Testis (tissue), 5 donors: ENCODE measurements at regions of chr7 and their contacts with region 1.

Region 1: GRCh38 chr7:4681886-4682620 is at the start of gene FOXK1:
- DNase-seq: peak; percentile 70
- H3K4me3 ChIP-seq: peak within 1 kb of the TSS; percentile 80 to 93
- H3K27ac ChIP-seq: peak within 1 kb of the TSS; percentile 92 to 95
- H3K4me1 ChIP-seq: peaks cover 13% of the 10 kb centered on the region
- H3K27me3 ChIP-seq: no peaks in the 10 kb centered on the region
- CTCF ChIP-seq: peak in 1 of 3 experiments; percentile 14
- POLR2A ChIP-seq: no peak
- total RNA-seq, gene FOXK1: 56.7 to 65.2 TPM

Region 2: DNA sequence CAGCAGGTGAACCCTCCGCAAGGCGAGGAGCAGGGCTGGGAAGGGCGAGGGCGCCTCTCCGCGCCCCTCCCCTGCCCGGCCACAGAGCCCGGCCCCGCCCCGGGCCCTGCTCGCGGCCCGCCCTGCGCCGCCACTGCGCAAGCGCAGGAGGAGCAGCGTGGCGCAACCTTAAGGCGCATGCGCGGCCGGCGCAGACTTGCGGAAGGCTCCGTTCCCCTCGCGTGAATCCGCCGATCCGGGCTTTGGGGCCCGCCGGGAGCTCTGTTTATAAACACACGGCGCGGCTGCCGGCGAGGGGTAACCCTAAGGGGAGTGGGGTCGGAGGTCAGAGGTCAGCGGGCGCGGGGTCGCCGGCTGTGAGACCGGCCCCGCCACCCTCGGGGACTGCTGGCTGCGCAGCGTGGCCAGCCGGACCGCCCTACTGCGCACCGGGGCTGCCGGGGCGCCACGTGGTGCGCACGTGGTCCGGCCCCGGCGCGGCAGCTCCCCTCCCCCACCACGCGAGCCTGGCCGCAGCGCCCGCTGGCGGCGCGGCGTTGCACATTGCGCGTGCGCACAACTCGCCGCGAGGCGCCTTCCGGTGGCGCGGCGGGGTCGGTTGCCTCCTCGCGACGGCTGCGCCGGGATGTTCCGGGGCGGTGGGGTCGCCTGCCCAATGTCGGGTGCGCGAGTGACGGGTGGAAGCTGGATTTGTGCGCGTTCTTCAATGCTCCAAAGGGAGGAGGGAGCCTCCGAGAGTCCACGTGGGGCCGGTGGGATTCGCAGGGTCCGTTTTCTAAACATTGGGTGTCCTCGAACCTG is 40.2 kb before region 1 on chr7:
- intact Hi-C with region 1: loop called (anchors 5 kb)
- DNase-seq: peak; percentile 93
- H3K4me3 ChIP-seq: peak overlapping the region; percentile 61 to 72
- H3K27ac ChIP-seq: peak overlapping the region; percentile 64 to 91
- H3K4me1 ChIP-seq: no peaks in the 10 kb centered on the region
- H3K27me3 ChIP-seq: no peaks in the 10 kb centered on the region
- CTCF ChIP-seq: peak; percentile 27 to 77 (median 68)
- POLR2A ChIP-seq: peak; percentile 15

Region 3: DNA sequence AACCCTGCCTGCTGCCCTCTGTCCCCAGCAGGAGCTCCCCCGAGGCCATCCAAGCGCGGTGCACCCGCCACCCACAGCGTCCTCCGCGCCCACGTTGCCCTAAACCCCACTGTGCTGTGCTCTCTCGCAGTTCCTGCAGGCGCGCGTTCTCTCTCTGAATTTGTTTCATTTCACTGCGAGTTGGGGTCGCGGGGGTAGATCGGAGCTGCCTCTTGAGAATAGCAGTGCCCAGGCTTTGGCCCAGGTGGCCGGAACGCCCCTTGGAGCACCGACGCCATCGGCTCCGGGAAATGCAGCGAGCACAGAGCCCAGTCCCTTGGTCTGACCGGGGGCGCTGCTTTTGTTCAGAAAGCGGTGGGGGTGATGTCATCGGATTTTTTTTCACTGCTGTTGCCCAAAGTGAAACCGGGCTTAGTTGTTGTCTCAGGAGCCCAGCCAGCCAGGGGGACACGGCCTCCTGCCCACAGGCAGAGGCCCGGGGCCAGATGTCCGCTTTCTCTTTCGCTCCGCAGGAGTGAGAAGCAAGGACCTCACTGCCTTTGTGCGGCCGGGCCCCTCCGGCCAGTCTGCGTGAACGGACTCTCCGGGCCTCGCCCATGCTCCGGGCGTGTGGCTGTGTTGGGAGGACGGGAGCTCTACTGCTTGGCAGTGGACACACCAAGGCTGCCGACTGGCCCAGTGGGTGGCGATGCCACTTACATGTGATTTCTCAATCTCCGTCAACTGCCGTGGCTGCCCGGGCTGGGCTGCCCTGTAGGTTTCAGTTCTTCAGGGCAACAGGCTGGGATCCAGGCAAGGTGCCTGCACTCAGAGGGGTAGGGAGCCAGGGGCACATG is 43.2 kb after region 1 on chr7:
- intact Hi-C with region 1: no loop called
- DNase-seq: peak; percentile 70
- H3K4me3 ChIP-seq: peak overlapping the region; percentile 43 to 47
- H3K27ac ChIP-seq: peak overlapping the region; percentile 93 to 94
- H3K4me1 ChIP-seq: peaks cover 37% of the 10 kb centered on the region
- H3K27me3 ChIP-seq: no peaks in the 10 kb centered on the region
- CTCF ChIP-seq: no peak
- POLR2A ChIP-seq: no peak

Region 4: DNA sequence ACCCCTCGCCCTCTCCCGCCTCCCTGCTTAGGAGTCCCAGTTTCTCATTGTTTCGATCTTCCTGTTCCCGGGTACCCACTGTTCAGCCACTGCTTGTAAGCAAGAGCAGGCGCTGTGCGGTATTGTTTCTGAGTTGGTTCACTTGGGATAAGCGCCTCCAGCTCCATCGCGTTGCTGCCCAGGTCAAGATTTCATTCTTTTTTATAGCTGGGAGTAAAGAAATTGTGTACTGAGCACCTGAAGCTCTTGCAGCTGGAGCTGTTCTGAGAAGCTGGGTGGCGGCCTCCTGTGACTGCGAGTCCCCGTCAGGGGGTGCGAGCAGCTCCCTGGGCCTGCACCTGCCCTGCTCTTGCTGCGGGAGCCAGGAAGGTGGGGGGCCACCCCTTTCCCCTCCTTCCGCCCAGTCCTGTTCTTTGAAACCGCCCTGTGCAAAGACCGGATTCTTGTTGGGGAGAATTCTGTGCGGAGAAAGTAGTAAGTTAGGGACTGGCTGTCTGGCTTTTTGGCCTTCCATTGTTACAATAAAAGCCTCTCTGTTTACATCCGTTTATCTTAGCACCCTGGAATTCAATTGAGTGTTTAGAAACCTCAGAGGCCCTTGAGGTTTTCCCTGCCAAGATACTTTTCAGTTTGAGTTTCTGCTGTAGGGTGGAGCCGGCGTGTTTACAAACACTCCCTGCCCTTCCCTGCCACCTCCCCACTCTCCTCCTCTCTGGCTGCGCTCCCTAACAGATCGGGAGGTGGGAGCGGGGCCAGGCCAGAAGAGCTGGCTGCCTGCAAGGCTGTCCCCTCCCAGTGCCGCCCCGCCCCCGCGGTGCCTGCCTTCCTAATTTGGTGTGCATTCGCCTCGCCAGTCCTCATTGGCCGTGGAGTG is 62.6 kb after region 1 on chr7:
- intact Hi-C with region 1: loop called (anchors 10 kb)
- DNase-seq: peak; percentile 98
- H3K4me3 ChIP-seq: no peak overlapping the region
- H3K27ac ChIP-seq: peak overlapping the region; percentile 72 to 89
- H3K4me1 ChIP-seq: peaks cover 39% of the 10 kb centered on the region
- H3K27me3 ChIP-seq: no peaks in the 10 kb centered on the region
- CTCF ChIP-seq: no peak
- POLR2A ChIP-seq: no peak

Region 5: DNA sequence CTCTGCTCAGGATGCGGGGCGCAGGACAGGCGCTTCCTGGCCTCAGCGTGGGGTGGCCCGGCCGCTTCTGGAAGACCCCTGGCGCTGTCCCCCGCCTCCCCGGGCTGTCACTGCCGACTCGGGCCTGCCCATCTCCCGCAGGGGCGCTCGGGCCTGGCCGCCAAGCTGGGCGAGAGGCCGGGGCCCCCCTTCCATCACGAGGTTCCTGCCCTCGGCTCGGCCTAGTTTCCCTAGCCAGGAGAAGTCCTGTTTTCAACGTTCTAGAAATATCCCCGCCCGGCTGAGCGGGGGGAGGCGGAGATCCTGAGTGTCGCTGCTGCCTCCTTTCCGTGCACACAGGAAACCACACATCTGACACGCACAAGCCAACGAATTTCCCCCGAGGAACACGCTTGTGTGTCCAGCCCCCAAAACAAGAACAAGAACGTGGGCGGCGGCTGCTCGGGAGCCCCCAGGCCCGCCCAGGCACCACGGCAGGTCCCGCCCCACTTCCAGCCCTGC is 127.1 kb after region 1 on chr7:
- intact Hi-C with region 1: no loop called
- DNase-seq: no peak
- H3K4me3 ChIP-seq: peak overlapping the region in 1 of 2 donors; percentile 39
- H3K27ac ChIP-seq: no peak overlapping the region
- H3K4me1 ChIP-seq: no peaks in the 10 kb centered on the region
- H3K27me3 ChIP-seq: no peaks in the 10 kb centered on the region
- CTCF ChIP-seq: no peak
- POLR2A ChIP-seq: no peak